ENCODE measurements at regions of chr7 and their contacts with region 1.

Region 1: DNA sequence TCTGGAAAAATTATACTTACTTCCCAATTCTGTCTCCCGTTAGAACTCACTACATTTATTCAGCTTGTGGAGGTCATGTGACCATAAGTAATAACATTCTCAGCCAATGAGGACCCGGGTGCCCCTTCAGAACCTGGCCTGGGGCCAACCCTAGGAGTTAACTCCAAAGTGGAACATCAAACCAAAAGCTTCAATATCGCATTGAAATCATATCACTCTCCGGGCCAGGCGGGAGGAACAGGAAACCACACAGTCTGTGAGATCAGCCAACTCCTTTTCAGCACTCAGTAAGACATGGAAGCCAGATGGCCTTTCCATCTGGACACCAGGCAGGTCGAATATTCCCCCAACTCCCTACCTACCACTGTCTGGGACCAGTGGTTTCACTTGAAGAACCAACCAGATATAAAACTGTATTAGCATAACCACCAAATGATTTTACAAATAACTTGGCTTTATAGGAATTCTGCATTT is 5.5 kb downstream of the CREB3L2 start:
- DNase-seq: no peak
- H3K4me3 ChIP-seq: no peak overlapping the region
- H3K27ac ChIP-seq: peak overlapping the region; percentile 3
- H3K4me1 ChIP-seq: peaks cover 3% of the 10 kb centered on the region
- H3K27me3 ChIP-seq: no peaks in the 10 kb centered on the region
- CTCF ChIP-seq: no peak

Region 2: GRCh38 chr7:137953665-137954470 is 42.5 kb before region 1 on chr7:
- intact Hi-C with region 1: loop called (anchors 5 kb)
- DNase-seq: peak; percentile 66
- H3K4me3 ChIP-seq: no peak overlapping the region
- H3K27ac ChIP-seq: peak overlapping the region; percentile 76
- H3K4me1 ChIP-seq: peaks cover 21% of the 10 kb centered on the region
- H3K27me3 ChIP-seq: no peaks in the 10 kb centered on the region
- CTCF ChIP-seq: no peak

Region 3: DNA sequence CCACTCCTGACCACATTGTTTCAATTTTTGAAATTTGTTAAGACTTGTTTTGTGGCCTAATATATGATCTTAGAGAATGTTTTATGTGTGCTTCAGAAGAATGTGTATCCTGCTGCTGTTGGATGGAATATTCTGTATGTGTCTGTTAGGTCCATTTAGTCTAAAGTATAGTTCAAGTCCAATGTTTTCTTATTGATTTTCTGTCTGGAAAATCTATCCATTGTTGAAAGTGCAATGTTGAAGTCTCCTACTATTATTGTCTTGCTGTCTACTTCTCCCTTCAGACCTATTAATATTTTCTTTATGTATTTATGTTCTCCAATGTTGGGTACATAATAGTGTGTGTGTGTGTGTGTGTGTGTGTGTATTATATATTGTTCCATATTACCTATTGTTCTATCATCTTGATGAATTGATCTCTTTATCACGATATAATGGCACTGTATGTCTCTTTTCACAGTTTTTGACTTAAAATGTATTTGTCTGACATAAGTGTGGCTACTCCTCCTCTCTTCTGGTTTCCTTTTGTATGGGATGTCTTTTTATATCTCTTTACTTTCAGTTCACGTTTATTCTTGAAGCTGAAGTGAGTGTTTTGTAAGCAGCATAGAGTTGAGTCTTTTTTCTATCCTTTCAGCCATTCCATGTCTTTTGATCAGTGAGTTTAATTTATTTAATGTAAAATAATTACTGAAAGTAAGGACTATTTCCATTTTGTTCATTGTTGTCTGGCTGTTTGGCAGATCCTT is 141.2 kb after region 1 on chr7:
- intact Hi-C with region 1: no loop called
- DNase-seq: no peak
- H3K4me3 ChIP-seq: no peak overlapping the region
- H3K27ac ChIP-seq: no peak overlapping the region
- H3K4me1 ChIP-seq: no peaks in the 10 kb centered on the region
- H3K27me3 ChIP-seq: no peaks in the 10 kb centered on the region
- CTCF ChIP-seq: no peak

Region 4: DNA sequence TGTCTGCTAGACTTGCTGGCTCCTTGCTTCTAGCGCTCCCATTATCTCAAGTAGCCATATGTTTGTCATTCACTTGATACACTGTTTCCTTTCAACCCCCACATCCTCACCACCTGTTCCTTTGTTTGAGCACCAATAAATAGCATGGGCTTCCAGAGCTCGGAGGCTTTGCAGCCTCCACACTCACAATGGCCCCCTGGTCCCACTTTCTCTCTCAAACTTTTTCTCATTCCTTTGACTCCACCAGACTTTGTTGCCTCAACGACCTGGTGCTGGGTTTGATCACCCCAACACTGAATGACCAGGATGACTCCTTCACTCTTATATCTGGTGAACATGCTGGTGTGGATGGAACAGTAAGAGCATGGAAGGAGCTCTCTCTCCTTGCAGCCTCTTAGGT is 349.2 kb after region 1 on chr7:
- intact Hi-C with region 1: no loop called
- DNase-seq: no peak
- H3K4me3 ChIP-seq: no peak overlapping the region
- H3K27ac ChIP-seq: no peak overlapping the region
- H3K4me1 ChIP-seq: no peaks in the 10 kb centered on the region
- H3K27me3 ChIP-seq: no peaks in the 10 kb centered on the region
- CTCF ChIP-seq: no peak

Measured in colonic mucosa (tissue), 4 donors.